K562 (cell line): ENCODE measurements at regions of chr11 and their contacts with region 1.

Region 1: GRCh38 chr11:31968461-31969358 is 122.2 kb upstream of the RCN1 start:
- DNase-seq: no peak
- ATAC-seq: no peak
- H3K4me3 ChIP-seq: no peak overlapping the region
- H3K27ac ChIP-seq: no peak overlapping the region
- H3K4me1 ChIP-seq: no peaks in the 10 kb centered on the region
- H3K27me3 ChIP-seq: peaks cover 4 to 13% of the 10 kb centered on the region in 2 experiments; a peak in 3 of 5 replicates
- CTCF ChIP-seq: no peak
- EP300 ChIP-seq: no peak
- POLR2A ChIP-seq: no peak
- RAD21 ChIP-seq: no peak

Region 2: GRCh38 chr11:31921081-31921480 is 47.6 kb before region 1 on chr11:
- CTCF ChIA-PET with region 1: no interaction called
- POLR2A ChIA-PET with region 1: interaction called, 3 read pairs
- in situ Hi-C with region 1: loop called (anchors 5 kb)
- intact Hi-C with region 1: no loop called
- DNase-seq: no peak
- ATAC-seq: no peak
- H3K4me3 ChIP-seq: no peak overlapping the region
- H3K27ac ChIP-seq: no peak overlapping the region
- H3K4me1 ChIP-seq: no peaks in the 10 kb centered on the region
- H3K27me3 ChIP-seq: no peaks in the 10 kb centered on the region; a peak in 2 of 5 replicates
- CTCF ChIP-seq: no peak
- EP300 ChIP-seq: no peak
- POLR2A ChIP-seq: no peak
- RAD21 ChIP-seq: no peak